Right ventricle myocardium superior (tissue), 1 donor: ENCODE measurements at regions of chr9 and their contacts with region 1.

Region 1: GRCh38 chr9:27033823-27034403 is 28.4 kb upstream of the LRRC19 start:
- DNase-seq: no peak
- ATAC-seq: peak; percentile 72

Region 2: DNA sequence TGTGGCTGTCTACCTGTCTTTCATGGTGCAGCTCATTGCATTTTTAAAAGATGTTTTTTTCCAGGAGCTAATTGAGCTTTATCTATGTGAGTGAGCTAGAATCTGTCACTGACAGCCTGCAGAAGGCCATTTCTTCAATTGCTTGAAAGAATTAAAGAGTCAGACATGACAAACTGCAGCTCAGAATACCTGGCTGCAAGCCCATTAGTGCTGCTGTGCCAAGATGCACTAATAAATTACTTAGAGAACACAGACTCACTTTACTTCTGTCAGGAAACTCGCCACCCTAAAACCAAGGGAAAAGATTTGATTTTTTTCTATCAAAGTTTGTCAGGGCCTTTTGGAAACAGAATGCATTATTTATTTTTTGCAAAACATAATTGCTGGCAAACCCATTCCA is 509.6 kb before region 1 on chr9:
- intact Hi-C with region 1: no loop called
- DNase-seq: no peak
- ATAC-seq: no peak

Region 3: GRCh38 chr9:27194401-27195091 is 160.6 kb after region 1 on chr9:
- intact Hi-C with region 1: loop called (anchors 10 kb)
- DNase-seq: no peak
- ATAC-seq: peak; percentile 39

Region 4: GRCh38 chr9:27276193-27277030 is 242.5 kb after region 1 on chr9:
- intact Hi-C with region 1: loop called (anchors 5 kb)
- DNase-seq: no peak
- ATAC-seq: peak; percentile 62

Region 5: DNA sequence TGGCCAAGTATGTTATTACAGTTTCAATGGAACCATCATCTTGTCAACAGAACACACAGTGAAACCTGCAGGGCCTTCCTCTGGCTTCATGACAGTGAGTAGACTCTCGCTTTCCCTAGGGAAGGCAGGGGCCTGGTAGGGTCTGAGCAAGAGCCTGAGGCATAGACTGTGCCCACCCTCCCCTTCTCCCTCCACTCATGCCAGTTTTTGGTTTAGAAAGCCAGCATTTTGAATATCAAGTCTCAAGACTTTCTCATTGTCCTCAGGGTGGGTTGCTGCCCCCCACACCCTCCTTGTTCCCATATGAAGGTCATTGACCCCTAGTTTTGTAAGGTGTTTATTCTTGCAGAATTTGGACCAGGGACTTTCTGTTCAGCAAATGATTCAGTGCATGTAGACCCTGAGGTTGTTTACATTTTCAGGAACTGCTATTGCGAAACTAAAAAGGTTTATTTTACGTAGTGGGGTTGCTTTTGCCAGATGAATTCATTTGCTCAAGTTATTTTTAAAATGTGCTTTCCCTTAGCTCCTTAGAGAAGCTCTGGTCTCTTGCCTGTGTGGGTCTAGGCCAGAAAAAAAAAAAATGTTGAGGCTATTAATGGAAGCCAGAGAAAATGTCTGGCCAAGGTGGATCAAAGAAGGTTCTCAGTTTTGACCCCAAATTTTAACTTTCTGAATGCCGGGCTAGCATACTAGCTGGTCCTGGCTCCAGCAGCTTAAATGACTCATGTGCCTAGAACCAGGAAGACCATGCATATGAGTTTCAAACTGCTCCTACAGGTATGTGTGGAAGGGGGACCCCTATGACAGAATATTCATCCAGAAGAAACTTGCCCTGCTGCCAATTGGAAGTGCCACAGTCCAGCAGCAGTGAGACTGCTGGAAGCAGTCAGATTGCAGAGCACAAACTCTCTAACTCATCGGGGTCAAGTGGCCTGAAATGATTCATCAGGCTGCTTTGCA is 505.8 kb after region 1 on chr9:
- intact Hi-C with region 1: no loop called
- DNase-seq: peak; percentile 33
- ATAC-seq: peak; percentile 91